ENCODE measurements at regions of chr4 and their contacts with region 1.

Region 1: DNA sequence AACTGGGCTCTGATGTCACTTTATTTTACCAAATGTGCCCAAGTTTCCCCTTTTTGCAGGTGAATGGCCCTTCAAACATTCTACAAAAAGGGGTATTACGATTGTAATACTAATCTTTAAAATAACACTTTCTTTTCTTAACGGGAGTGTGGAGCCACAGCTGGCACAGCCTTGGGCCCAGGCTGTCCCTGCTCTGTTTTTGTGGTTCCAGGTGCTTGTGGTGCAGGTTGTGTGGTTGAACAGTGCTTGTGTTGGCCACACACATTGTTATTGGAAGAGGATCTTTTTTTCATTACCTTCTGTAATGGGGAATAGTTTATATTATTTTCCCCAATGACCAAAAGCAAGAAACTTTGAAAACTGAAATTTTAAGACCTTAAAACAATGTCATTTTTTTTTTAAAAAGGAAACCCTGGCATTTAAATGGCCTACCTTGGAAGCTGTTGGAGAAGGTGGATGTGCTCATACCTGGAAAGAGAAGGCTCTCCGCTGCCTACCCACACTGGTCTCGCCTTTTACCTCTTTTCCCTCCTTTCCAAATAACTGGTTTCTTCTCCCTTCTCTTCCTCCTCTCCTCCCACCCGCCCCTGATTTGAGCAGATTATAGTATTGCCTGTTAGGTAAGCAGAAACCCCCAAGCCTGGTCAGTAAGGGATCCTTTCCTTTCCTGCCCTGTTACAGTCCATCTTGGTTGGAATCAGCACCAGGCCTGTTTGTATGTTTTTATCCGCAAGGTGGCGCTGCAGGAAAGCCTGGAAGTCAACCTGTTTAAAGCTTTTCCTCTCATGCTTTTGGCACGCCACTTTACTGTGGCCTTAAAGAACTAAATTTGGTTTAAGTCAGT is 28.6 kb downstream of the HADH start:
- DNase-seq: peak; percentile 69
- H3K4me3 Mint-ChIP-seq: no peak overlapping the region
- H3K27ac Mint-ChIP-seq: no peak overlapping the region
- H3K4me1 Mint-ChIP-seq: no peaks in the 10 kb centered on the region
- H3K27me3 Mint-ChIP-seq: no peaks in the 10 kb centered on the region
- CTCF ChIP-seq: peak; percentile 54

Region 2: GRCh38 chr4:106818764-106819163 is 1199.5 kb before region 1 on chr4:
- CTCF ChIA-PET with region 1: no interaction called
- intact Hi-C with region 1: no loop called
- DNase-seq: no peak
- H3K4me3 Mint-ChIP-seq: no peak overlapping the region
- H3K27ac Mint-ChIP-seq: no peak overlapping the region
- H3K4me1 Mint-ChIP-seq: no peaks in the 10 kb centered on the region
- H3K27me3 Mint-ChIP-seq: no peaks in the 10 kb centered on the region
- CTCF ChIP-seq: no peak

Region 3: DNA sequence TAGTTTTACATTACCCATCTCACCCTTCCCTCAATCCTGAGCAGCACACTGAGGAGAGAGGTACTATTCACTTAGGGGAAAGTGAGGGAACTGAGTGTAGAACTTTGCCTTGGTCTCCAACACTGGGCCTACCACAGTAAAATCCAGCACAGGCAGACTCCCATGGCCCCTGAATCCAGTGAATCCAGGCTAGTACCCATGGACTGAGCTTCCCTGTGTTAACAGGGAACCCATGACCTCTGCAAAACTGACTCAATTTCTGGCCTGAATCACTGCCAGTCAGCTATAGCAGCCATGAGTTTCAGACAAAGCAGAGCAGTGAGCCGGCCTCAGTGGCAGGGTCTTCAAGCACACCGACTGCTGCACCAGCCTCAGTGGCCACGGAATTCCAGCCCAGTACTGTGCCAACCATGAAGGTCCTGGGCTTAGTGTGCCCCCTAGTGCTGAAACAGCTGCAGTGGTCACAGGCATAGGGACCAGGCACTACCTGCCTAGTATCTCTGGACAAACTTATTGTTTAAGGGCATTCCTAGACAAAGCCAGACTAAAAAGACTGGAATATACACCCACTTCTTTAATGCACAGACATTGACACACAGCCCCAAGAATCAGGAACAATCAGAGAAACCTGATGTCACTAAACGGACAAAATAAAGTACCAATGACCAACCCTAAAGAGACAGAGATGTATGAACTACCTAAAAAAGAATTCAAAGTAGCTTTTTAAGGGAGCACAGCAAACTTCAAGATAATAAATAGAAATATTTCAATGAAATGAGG is 474.7 kb after region 1 on chr4:
- CTCF ChIA-PET with region 1: interaction called, 3 read pairs
- intact Hi-C with region 1: loop called (anchors 1 kb)
- DNase-seq: peak; percentile 43
- H3K4me3 Mint-ChIP-seq: no peak overlapping the region
- H3K27ac Mint-ChIP-seq: no peak overlapping the region
- H3K4me1 Mint-ChIP-seq: no peaks in the 10 kb centered on the region
- H3K27me3 Mint-ChIP-seq: peaks cover 4% of the 10 kb centered on the region
- CTCF ChIP-seq: peak; percentile 38

Region 4: GRCh38 chr4:108570993-108571569 is 552.8 kb after region 1 on chr4:
- CTCF ChIA-PET with region 1: interaction called, 6 read pairs
- intact Hi-C with region 1: loop called (anchors 5 kb)
- DNase-seq: no peak
- H3K4me3 Mint-ChIP-seq: no peak overlapping the region
- H3K27ac Mint-ChIP-seq: no peak overlapping the region
- H3K4me1 Mint-ChIP-seq: no peaks in the 10 kb centered on the region
- H3K27me3 Mint-ChIP-seq: no peaks in the 10 kb centered on the region
- CTCF ChIP-seq: no peak